ENCODE measurements at regions of chr12 and their contacts with region 1.

Region 1: DNA sequence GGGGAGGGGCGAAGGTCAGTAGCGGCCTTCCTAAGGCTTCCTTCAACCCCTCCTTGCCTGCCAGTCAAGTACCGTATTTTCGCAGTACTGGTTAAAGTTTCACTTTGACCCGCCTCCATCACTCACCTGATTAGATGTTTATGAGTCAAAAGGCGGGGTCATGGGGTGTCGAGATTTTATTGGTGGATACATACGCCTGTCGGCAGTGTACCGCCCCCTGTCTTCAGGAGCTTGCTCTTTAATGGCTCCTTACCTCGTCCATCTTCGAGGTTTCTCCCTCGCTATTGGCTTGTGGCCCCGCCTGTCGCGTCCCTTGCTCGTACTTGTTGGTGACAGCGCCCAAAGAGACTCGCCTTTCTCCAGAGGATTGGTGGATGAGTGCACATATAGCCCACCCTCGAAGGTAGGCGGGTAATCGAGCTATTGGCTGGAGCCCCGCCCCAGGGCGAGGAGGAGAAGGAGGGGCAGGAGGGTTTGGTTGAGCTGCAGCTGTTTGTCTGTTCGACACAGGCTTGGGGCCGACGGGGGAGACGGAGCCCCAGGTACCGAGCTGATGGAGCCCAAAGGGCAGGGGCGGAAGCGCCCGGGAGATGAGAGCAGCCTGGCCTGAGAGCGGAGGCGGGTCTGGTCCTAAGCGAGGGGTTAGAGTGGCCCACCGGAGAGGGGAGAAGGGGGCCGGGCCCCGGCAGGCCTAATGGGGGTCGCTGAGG is at the start of gene RAB5B:
- DNase-seq: peak; percentile 95 to 100 (median 99)
- H3K4me3 ChIP-seq: peak within 1 kb of the TSS; percentile 60 to 73
- H3K4me3 Mint-ChIP-seq: no peak within 1 kb of the TSS
- H3K27ac ChIP-seq: peak within 1 kb of the TSS; percentile 87
- H3K27ac Mint-ChIP-seq: no peak within 1 kb of the TSS
- H3K4me1 ChIP-seq: peaks cover 37% of the 10 kb centered on the region
- H3K4me1 Mint-ChIP-seq: peaks cover 14 to 30% (median 23%) of the 10 kb centered on the region in 4 donors
- H3K27me3 ChIP-seq: no peaks in the 10 kb centered on the region
- H3K27me3 Mint-ChIP-seq: no peaks in the 10 kb centered on the region
- total RNA-seq, gene RAB5B: 106 to 112 TPM

Region 2: DNA sequence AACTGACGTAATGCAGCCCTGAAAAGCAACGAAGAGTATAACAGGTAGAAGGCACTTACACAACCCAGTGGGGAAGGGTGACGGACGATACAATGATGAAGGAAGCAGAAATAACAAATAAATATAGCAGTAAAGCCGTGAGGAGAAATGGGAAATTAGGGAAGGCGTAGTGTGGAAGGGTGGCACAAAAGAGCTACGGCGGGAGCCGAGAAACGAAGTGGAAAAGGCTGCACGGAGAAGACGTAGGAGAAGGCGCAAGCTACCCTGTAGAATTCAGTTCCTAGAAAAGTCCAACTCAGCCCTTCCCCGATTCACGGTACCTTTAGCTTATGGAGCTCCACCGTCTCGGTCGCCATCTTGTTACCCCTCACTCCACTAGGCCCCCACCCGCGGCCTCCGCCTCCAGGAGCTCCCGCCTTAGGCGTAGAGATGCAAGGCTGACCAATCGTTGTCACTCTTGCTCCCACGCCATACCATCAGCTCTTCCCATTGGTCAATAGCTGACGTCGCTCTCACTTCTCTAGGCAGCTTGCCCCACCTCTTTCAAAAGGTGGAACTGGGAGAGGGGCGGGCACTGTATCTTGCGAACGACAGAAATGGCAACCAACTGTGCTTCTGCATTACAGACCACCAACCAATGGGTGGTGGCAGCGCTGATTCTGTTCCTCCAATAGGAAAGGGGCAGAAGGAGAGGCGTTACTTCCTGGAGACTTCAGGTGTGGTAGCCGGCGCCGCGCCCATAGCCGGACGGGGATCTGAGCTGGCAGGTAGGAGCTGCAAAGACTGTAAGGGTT is 156.2 kb before region 1 on chr12 and contains the starts of genes ORMDL2 and SARNP:
- CTCF ChIA-PET with region 1: interaction called, 3 read pairs
- POLR2A ChIA-PET with region 1: interaction called, 46 read pairs
- intact Hi-C with region 1: loop called (anchors 1 kb)
- DNase-seq: peak; percentile 95 to 100 (median 99)
- H3K4me3 ChIP-seq: peak within 1 kb of the TSS; percentile 76 to 96
- H3K4me3 Mint-ChIP-seq: no peak within 1 kb of the TSS
- H3K27ac ChIP-seq: peak within 1 kb of the TSS; percentile 88
- H3K27ac Mint-ChIP-seq: no peak within 1 kb of the TSS
- H3K4me1 ChIP-seq: peaks cover 51% of the 10 kb centered on the region
- H3K4me1 Mint-ChIP-seq: peaks cover 23 to 36% (median 25%) of the 10 kb centered on the region in 4 donors
- H3K27me3 ChIP-seq: no peaks in the 10 kb centered on the region
- H3K27me3 Mint-ChIP-seq: no peaks in the 10 kb centered on the region
- total RNA-seq, gene ORMDL2: 42.6 to 44.4 TPM
- total RNA-seq, gene SARNP: 47.7 to 49.4 TPM

Region 3: DNA sequence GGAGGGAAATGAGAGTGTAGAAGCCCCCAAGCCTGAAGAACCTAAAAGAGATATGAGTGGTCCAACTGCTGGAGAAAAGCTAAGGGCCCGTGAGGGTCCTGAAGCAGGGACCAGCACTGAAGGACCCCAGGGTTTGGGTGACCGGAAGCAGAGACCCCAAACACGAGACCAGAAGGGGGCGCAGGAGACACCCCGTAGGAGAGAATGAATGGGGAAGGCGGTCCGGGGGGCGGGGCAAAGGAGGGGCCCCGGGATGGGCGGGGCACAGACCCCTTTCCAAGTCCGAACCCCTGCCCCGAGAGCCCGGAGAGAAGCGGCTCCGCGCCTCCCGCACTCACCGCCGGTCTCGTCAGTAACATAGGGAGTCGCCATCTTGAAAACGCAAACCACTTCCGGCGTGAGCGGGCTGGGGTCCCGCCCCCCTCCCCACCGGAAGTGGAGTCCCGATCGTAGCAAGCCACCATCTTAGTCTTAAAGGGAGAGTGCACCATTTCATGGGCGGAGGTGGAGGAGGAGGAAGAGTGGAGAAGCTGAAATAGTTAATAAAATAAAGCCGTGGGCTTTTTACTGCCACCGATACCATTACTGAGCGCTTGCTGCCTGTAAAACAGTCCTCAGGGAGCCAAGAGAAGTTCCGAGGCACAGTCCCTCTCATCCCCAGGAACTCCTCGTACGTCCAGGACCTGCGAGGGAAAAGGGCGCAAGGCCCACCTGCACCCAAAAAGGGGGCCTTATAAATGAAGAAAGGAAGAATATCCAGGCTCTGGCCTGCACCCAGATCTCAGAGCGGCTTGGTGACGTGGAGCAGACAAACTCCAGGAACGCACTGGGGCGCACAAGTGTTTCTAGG is 46.8 kb before region 1 on chr12:
- CTCF ChIA-PET with region 1: interaction called, 11 read pairs
- POLR2A ChIA-PET with region 1: interaction called, 155 read pairs
- intact Hi-C with region 1: loop called (anchors 1 kb)
- DNase-seq: peak; percentile 83 to 91 (median 85)
- H3K4me3 ChIP-seq: peak overlapping the region; percentile 95 to 100
- H3K4me3 Mint-ChIP-seq: peak overlapping the region; percentile 97 to 100 (median 99)
- H3K27ac ChIP-seq: peak overlapping the region; percentile 88
- H3K27ac Mint-ChIP-seq: peak overlapping the region; percentile 92 to 99 (median 96)
- H3K4me1 ChIP-seq: peaks cover 51% of the 10 kb centered on the region
- H3K4me1 Mint-ChIP-seq: peaks cover 36 to 79% (median 46%) of the 10 kb centered on the region in 4 donors
- H3K27me3 ChIP-seq: no peaks in the 10 kb centered on the region
- H3K27me3 Mint-ChIP-seq: no peaks in the 10 kb centered on the region

Region 4: DNA sequence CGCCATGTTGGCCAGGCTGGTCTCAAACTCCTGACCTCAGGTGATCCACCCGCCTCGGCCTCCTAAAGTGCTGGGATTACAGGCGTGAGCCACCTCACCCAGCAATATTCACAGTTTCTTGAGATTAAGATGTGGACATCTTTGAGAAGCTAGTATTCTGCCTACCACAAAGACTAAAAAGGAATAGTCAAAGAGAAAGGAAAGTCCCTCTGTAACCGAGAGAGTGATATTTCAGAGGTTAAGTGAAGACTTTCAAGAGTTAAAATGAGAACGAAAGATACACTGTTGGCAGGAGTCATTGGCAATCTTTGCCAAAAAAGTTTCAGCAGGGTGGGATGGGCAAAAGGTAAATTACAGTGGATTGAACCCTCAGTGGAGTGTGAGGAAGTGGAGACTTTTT is 27.2 kb before region 1 on chr12:
- CTCF ChIA-PET with region 1: no interaction called
- POLR2A ChIA-PET with region 1: interaction called, 19 read pairs
- intact Hi-C with region 1: no loop called
- DNase-seq: no peak
- H3K4me3 ChIP-seq: no peak overlapping the region
- H3K4me3 Mint-ChIP-seq: no peak overlapping the region
- H3K27ac ChIP-seq: no peak overlapping the region
- H3K27ac Mint-ChIP-seq: peak overlapping the region in 6 of 7 donors; percentile 43 to 74 (median 58)
- H3K4me1 ChIP-seq: peaks cover 9% of the 10 kb centered on the region
- H3K4me1 Mint-ChIP-seq: peaks cover 17 to 44% (median 26%) of the 10 kb centered on the region in 4 donors
- H3K27me3 ChIP-seq: no peaks in the 10 kb centered on the region
- H3K27me3 Mint-ChIP-seq: no peaks in the 10 kb centered on the region

Region 5: DNA sequence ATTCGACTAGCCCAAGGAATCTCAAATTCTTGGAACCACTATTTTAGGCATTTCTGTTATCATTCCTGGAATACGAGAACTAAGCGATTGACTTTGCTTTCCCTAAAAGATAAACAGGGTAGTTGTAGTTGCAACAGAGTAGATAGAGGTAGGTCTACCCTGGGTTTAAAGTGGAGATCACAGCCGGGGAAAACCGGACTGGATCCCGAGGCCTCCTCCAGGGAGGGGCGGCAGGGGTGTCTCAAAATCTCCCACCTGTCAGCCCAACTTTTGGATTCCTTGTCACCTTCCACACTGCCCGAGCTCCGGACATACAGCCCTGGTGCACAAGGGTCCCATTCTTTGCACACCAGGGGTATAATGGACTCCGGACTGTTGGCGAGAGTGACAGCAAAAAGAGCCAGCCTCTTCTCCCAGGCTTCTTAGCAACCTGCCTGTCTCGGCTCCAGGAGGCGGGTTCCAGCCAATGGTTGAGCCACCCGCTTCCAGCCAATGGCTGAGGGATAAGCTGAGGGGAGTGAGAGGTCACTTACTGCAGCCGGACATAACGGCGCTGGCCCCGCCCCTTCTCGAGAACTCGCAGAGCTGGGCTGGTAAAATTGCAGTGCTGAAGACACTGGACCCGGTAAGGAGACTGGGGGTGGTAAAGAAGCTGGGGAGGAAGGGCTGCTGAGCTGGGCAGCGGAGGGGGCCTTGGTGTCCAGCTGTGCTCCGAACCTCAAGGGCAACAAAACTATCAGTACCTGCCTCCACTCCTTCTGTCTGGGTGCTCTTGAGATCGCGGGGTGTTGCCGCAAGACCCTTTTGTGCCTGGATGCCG is 23.2 kb after region 1 on chr12 and contains the start of gene SUOX:
- CTCF ChIA-PET with region 1: interaction called, 11 read pairs
- POLR2A ChIA-PET with region 1: interaction called, 20 read pairs
- intact Hi-C with region 1: loop called (anchors 2 kb)
- DNase-seq: peak in 1 of 5 donors; percentile 6
- H3K4me3 ChIP-seq: peak within 1 kb of the TSS in 1 of 2 donors; percentile 18
- H3K4me3 Mint-ChIP-seq: peak within 1 kb of the TSS in 6 of 8 donors; percentile 2 to 54 (median 46)
- H3K27ac ChIP-seq: no peak within 1 kb of the TSS
- H3K27ac Mint-ChIP-seq: peak within 1 kb of the TSS in 6 of 7 donors; percentile 14 to 92 (median 62)
- H3K4me1 ChIP-seq: peaks cover 16% of the 10 kb centered on the region
- H3K4me1 Mint-ChIP-seq: peaks cover 10 to 23% (median 12%) of the 10 kb centered on the region in 4 donors
- H3K27me3 ChIP-seq: no peaks in the 10 kb centered on the region
- H3K27me3 Mint-ChIP-seq: peaks cover 0 to 1% of the 10 kb centered on the region in 2 donors
- total RNA-seq, gene SUOX: 5.4 to 5.9 TPM

Region 6: GRCh38 chr12:56041552-56042429 is 68.0 kb after region 1 on chr12 and contains the start of gene RPS26:
- CTCF ChIA-PET with region 1: interaction called, 5 read pairs
- POLR2A ChIA-PET with region 1: interaction called, 5 read pairs
- intact Hi-C with region 1: loop called (anchors 1 kb)
- DNase-seq: peak; percentile 95 to 98 (median 96)
- H3K4me3 ChIP-seq: peak within 1 kb of the TSS; percentile 94 to 97
- H3K4me3 Mint-ChIP-seq: peak within 1 kb of the TSS; percentile 98 to 100 (median 99)
- H3K27ac ChIP-seq: peak within 1 kb of the TSS; percentile 87
- H3K27ac Mint-ChIP-seq: peak within 1 kb of the TSS; percentile 96 to 100 (median 99)
- H3K4me1 ChIP-seq: peaks cover 23% of the 10 kb centered on the region
- H3K4me1 Mint-ChIP-seq: peaks cover 15 to 45% (median 23%) of the 10 kb centered on the region in 4 donors
- H3K27me3 ChIP-seq: no peaks in the 10 kb centered on the region
- H3K27me3 Mint-ChIP-seq: no peaks in the 10 kb centered on the region
- total RNA-seq, gene RPS26: 55.6 to 55.8 TPM

Measured in CD4-positive, alpha-beta memory T cell (primary cell).